Naive thymus-derived CD4-positive, alpha-beta T cell (primary cell): ENCODE measurements at regions of chr1 and their contacts with region 1.

Region 1: DNA sequence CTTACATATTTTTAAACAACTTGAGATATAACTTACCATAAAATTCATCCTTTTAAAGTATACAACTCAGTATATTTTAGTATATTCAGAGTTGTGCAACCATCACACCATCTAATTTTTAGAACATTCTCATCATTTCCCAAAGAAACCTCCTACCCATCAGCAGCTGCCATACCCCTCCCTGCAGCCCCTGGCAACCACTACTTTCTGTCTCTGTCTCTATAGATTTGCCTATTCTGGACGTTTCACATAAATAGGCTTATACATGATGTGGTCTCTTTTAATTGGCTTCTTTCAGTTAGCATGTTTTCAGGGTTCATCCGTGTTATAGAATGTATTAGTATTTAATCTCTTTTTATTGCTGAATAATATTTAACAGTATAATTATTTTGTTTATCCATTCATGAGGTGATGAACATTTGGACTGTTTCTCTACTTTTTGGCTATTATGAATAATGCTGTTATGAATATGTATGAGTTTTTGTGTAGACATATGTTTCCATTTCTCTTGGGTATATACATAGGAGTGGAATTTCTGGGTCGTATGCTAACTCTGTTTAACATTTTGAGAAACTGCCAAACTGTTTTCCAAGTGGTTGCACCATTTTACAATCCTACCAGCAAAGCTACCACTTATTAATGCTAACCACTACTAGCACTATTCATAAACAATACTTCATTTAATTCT is 29.5 kb downstream of the WDR26 start:
- DNase-seq: no peak
- ATAC-seq: no peak
- H3K4me3 ChIP-seq: no peak overlapping the region
- H3K4me3 Mint-ChIP-seq: no peak overlapping the region
- H3K27ac ChIP-seq: no peak overlapping the region
- H3K27ac Mint-ChIP-seq: peak overlapping the region in 7 of 9 donors; percentile 12 to 73 (median 44)
- H3K4me1 ChIP-seq: peaks cover 0 to 5% of the 10 kb centered on the region in 2 donors
- H3K4me1 Mint-ChIP-seq: peaks cover 5 to 45% (median 32%) of the 10 kb centered on the region in 7 donors
- H3K27me3 ChIP-seq: no peaks in the 10 kb centered on the region
- H3K27me3 Mint-ChIP-seq: no peaks in the 10 kb centered on the region

Region 2: GRCh38 chr1:224420106-224420505 is 15.0 kb after region 1 on chr1:
- CTCF ChIA-PET with region 1: no interaction called
- POLR2A ChIA-PET with region 1: interaction called, 3 read pairs
- intact Hi-C with region 1: loop called in 1 of 2 experiments (anchors 2 kb)
- DNase-seq: no peak
- ATAC-seq: no peak
- H3K4me3 ChIP-seq: no peak overlapping the region
- H3K4me3 Mint-ChIP-seq: no peak overlapping the region
- H3K27ac ChIP-seq: no peak overlapping the region
- H3K27ac Mint-ChIP-seq: no peak overlapping the region
- H3K4me1 ChIP-seq: peaks cover 0 to under 1% of the 10 kb centered on the region in 2 donors
- H3K4me1 Mint-ChIP-seq: peaks cover 11 to 36% (median 19%) of the 10 kb centered on the region in 7 donors
- H3K27me3 ChIP-seq: no peaks in the 10 kb centered on the region
- H3K27me3 Mint-ChIP-seq: no peaks in the 10 kb centered on the region

Region 3: DNA sequence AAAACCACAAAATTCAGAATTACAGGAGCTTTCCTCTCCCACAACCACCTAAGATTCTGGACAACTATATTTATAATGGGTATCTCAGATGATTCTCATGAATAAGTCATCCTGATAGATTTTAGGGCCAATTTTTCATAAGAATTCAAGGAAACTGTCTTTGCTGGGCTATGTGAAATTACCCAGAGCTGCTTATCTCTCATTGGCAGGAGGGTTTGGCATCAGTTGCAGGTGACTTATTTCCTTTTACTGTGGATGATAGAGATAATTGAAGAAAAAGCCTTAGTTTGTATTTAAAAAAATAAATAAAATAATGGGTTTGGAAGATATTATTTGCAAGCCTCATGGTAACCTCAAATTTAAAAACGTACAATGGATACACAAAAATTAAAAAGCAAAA is 67.7 kb after region 1 on chr1:
- CTCF ChIA-PET with region 1: no interaction called
- POLR2A ChIA-PET with region 1: no interaction called
- intact Hi-C with region 1: no loop called
- DNase-seq: no peak
- ATAC-seq: no peak
- H3K4me3 ChIP-seq: no peak overlapping the region
- H3K4me3 Mint-ChIP-seq: no peak overlapping the region
- H3K27ac ChIP-seq: no peak overlapping the region
- H3K27ac Mint-ChIP-seq: no peak overlapping the region
- H3K4me1 ChIP-seq: no peaks in the 10 kb centered on the region
- H3K4me1 Mint-ChIP-seq: no peaks in the 10 kb centered on the region
- H3K27me3 ChIP-seq: no peaks in the 10 kb centered on the region
- H3K27me3 Mint-ChIP-seq: peaks cover 0 to 7% (median 0%) of the 10 kb centered on the region in 5 donors

Region 4: DNA sequence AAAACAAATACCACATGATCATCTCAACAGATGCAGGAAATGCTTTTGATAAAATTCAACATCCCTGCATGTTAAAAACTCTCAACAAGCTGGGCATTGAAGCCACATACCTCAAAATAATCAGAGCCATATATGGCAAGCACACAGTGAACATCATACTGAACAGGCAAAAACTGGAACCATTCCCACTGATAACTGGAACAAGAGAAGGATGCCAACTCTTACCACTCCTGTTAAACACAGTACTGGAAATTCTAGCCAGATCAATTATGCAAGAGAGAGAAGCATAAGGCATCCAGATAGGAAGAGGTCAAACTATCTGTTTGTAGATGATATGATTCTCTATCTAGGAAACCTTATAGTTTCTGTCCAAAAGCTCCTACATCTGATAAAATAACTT is 616.0 kb after region 1 on chr1:
- CTCF ChIA-PET with region 1: no interaction called
- POLR2A ChIA-PET with region 1: no interaction called
- intact Hi-C with region 1: no loop called
- DNase-seq: no peak
- ATAC-seq: no peak
- H3K4me3 ChIP-seq: no peak overlapping the region
- H3K4me3 Mint-ChIP-seq: no peak overlapping the region
- H3K27ac ChIP-seq: no peak overlapping the region
- H3K27ac Mint-ChIP-seq: no peak overlapping the region
- H3K4me1 ChIP-seq: no peaks in the 10 kb centered on the region
- H3K4me1 Mint-ChIP-seq: no peaks in the 10 kb centered on the region
- H3K27me3 ChIP-seq: no peaks in the 10 kb centered on the region
- H3K27me3 Mint-ChIP-seq: peaks cover 0 to 32% (median 13%) of the 10 kb centered on the region in 5 donors

Region 5: GRCh38 chr1:225413708-225414375 is 1008.8 kb after region 1 on chr1:
- CTCF ChIA-PET with region 1: no interaction called
- POLR2A ChIA-PET with region 1: no interaction called
- intact Hi-C with region 1: no loop called
- DNase-seq: peak in 1 of 9 donors; percentile 6
- ATAC-seq: peak; percentile 34
- H3K4me3 ChIP-seq: no peak overlapping the region
- H3K4me3 Mint-ChIP-seq: no peak overlapping the region
- H3K27ac ChIP-seq: no peak overlapping the region
- H3K27ac Mint-ChIP-seq: no peak overlapping the region
- H3K4me1 ChIP-seq: no peaks in the 10 kb centered on the region
- H3K4me1 Mint-ChIP-seq: peaks cover 8 to 38% (median 19%) of the 10 kb centered on the region in 7 donors
- H3K27me3 ChIP-seq: no peaks in the 10 kb centered on the region
- H3K27me3 Mint-ChIP-seq: no peaks in the 10 kb centered on the region